ENCODE measurements at regions of chr17 and their contacts with region 1.

Region 1: DNA sequence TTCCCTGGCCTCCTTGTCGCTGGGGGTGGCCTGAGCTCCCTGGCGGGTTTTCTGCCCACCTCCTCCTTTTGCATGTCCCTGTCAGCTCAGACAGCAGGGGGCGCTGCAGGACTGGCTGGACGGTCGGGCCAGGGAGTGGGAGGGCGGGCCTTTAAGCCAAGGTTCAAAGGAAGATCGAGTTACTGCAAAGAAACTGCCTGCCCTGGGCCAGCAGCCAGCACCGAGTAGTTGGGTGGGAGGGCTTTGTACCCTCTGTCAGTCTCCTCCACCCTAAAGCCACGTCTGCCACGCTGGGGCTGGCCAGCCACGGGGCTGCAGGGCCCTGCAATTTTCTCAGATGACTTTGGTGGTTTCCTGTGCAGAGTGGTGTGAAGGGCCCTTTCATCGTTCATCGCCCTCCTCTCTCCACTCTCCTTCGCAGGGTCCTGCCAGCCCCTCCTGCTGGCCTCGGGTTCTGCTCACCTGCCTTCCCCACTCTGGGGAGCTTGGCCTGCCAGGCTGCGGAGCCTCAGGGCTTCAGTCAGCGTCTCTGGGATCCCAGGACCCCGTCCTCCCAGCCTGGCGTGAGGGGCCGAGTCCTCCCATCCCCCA is 12.3 kb downstream of the GPR142 start:
- DNase-seq: peak; percentile 98
- ATAC-seq: peak; percentile 93
- H3K4me3 Mint-ChIP-seq: no peak overlapping the region
- H3K27ac Mint-ChIP-seq: no peak overlapping the region
- H3K4me1 Mint-ChIP-seq: peaks cover 13% of the 10 kb centered on the region
- H3K27me3 Mint-ChIP-seq: no peaks in the 10 kb centered on the region; the same call in 1 of the 2 replicates
- CTCF ChIP-seq: peak; percentile 94

Region 2: DNA sequence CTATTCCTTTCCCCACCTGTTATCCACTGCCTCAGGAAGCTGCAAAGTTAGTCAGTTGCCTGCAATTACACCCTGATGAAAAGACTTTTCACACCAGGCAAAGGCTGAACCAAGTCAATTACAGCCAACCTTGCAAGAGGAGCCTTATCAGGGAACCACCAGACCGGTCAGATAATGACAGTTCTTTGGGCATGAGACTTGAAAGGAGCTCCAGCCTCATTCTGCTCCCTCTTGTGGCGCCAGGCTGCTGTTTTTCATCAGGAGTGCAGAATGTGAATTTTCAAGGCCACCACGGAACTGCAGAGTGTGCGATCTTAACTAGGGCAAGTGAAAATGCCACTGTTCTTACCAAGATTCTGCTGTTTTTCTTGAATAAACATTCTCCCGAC is 83.0 kb before region 1 on chr17:
- CTCF ChIA-PET with region 1: interaction called, 14 read pairs
- POLR2A ChIA-PET with region 1: no interaction called
- DNase-seq: peak; percentile 56
- ATAC-seq: peak; percentile 74
- H3K4me3 Mint-ChIP-seq: no peak overlapping the region
- H3K27ac Mint-ChIP-seq: no peak overlapping the region
- H3K4me1 Mint-ChIP-seq: no peaks in the 10 kb centered on the region
- H3K27me3 Mint-ChIP-seq: peaks cover 2% of the 10 kb centered on the region; the same call in 1 of the 2 replicates
- CTCF ChIP-seq: no peak; the same call in 1 of the 2 replicates

Region 3: DNA sequence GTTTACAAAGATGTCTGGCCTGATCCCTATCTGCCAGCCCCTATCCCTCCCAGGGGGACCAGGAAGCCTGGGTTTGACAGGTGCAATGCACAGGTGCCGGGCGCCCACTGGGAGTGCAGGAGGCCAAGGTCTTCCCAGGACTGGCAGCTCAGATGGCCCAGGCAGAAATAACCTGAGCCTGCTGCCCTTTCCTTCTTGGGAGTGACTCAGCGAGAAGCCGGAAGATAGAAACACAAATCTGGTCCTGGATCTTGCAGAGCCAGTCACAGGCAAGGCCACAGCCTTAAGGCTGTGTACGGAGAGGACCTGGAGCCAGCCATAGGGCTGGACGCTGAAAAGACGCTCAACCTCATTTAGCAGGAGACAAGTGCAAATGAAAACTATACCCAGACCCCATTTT is 15.4 kb after region 1 on chr17:
- CTCF ChIA-PET with region 1: interaction called, 48 read pairs
- POLR2A ChIA-PET with region 1: interaction called, 11 read pairs
- DNase-seq: no peak
- ATAC-seq: no peak
- H3K4me3 Mint-ChIP-seq: no peak overlapping the region
- H3K27ac Mint-ChIP-seq: no peak overlapping the region
- H3K4me1 Mint-ChIP-seq: peaks cover 6% of the 10 kb centered on the region; the same call in 1 of the 2 replicates
- H3K27me3 Mint-ChIP-seq: no peaks in the 10 kb centered on the region
- CTCF ChIP-seq: no peak

Region 4: DNA sequence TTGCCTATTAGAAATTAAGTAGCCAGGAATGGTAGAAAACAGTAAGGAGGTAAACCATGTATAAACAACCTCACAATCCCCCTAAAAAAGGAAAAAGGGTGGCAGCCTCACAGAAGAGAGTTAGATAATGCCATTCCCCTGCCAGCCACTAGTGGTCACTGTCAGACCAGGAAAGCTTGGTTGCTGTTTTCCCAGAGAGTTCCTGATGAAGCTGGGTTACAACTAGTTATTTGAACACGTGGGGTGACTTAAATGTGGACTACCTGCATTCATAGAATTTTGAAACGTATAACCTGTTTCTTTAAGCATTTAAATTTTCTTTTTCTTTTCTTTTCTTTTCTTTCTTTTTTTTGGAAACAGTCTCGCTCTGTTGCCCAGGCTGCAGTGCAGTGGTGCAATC is 58.1 kb after region 1 on chr17:
- CTCF ChIA-PET with region 1: interaction called, 51 read pairs
- POLR2A ChIA-PET with region 1: interaction called, 3 read pairs
- DNase-seq: peak; percentile 52
- ATAC-seq: no peak
- H3K4me3 Mint-ChIP-seq: no peak overlapping the region
- H3K27ac Mint-ChIP-seq: no peak overlapping the region
- H3K4me1 Mint-ChIP-seq: peaks cover 18% of the 10 kb centered on the region
- H3K27me3 Mint-ChIP-seq: peaks cover 11% of the 10 kb centered on the region
- CTCF ChIP-seq: peak; percentile 82

Region 5: DNA sequence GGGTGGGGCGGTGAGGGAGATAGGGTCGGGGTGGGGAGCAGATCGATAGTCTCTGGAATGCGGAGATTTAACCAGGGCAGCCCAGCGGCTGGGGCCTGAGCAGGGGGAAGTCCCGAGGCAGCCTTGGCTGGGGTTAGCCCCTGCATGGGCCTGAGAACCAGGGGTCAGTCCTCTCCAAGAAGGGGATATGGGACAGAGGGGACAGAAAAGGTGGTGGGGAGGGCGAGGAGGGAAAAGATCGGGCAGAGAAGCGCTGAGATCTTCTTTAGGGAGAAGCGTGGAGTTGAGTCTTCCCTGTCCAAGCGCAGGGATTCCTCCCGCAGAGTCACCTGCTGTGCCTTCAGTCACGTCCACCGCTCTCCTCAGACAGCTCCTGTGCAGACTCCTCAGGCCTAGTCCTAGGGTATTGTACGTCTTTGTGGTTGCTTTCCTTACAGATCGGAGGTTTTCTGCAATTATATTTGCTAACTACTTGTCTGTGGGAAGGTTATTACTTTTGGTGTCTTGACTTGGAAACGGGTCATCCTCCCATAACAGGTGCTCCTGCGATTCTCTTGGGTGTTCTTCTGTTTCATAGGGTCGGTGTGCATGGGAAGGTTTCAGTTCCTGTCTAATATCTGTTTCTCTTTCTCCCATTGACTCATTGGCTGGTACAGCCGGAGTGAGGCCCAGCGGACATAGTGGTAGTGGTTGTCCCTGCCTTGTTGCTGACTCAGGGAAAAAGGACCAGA is 87.8 kb after region 1 on chr17:
- CTCF ChIA-PET with region 1: interaction called, 10 read pairs
- POLR2A ChIA-PET with region 1: interaction called, 3 read pairs
- DNase-seq: no peak
- ATAC-seq: peak; percentile 61
- H3K4me3 Mint-ChIP-seq: peak overlapping the region; percentile 59
- H3K27ac Mint-ChIP-seq: no peak overlapping the region
- H3K4me1 Mint-ChIP-seq: peaks cover 4% of the 10 kb centered on the region
- H3K27me3 Mint-ChIP-seq: peaks cover 17% of the 10 kb centered on the region
- CTCF ChIP-seq: no peak

Region 6: DNA sequence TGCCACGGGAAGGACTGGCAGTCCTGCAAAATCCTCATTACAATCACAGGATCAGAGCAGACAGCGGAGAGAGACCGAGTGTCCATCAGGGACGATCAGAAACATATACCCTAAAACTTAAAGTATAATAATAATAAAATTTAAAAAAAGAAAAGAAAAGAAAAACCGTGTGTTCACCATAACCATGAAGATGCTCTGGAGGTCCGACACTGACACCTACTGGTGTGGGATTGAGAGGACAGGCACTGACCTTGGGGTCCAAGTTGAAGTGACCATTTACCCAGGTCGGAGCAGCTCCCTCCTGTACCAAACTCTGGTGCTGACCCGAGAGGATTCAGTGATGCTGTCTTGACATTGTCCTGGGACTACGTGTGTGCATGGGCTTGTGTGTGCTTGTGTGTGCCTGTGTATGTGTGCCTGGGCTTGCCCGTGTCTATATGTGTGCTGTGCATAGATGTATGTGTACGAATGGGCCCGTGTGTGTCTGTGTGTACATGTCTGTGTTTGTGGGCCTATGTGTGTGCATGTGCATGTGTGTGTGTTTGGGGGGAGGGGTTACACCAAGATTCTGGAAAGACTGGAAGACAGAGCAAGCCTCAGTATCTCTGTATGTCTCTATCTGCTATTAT is 222.5 kb after region 1 on chr17:
- CTCF ChIA-PET with region 1: interaction called, 13 read pairs
- POLR2A ChIA-PET with region 1: no interaction called
- DNase-seq: peak; percentile 61
- ATAC-seq: peak; percentile 79
- H3K4me3 Mint-ChIP-seq: no peak overlapping the region
- H3K27ac Mint-ChIP-seq: no peak overlapping the region
- H3K4me1 Mint-ChIP-seq: peaks cover 7% of the 10 kb centered on the region
- H3K27me3 Mint-ChIP-seq: peaks cover 6% of the 10 kb centered on the region
- CTCF ChIP-seq: peak; percentile 48

Measured in WTC11 (cell line).